CD14-positive monocyte (primary cell): ENCODE measurements at regions of chr15 and their contacts with region 1.

Region 1: DNA sequence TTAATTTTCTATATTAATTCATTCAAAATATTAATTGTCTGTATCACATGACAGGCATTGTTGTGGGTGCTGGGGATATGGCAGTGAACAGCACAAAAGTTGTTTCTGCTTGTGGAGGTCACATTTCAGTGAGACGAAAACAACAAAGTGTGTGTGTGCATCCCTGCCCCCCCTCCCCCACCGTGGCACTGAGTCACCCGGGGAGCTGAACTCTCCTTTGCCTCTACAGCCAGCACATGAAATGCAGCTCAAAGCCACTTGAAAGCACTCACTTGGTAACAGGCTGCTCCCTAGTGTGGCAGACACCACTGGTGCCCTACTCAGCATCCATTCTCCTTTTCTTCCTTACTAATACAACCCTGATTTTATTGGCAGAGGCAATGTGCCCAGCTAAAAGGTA is 16.9 kb upstream of the SCAMP5 start:
- DNase-seq: no peak
- H3K4me3 ChIP-seq: no peak overlapping the region
- H3K4me3 Mint-ChIP-seq: no peak overlapping the region
- H3K27ac ChIP-seq: no peak overlapping the region
- H3K27ac Mint-ChIP-seq: no peak overlapping the region
- H3K4me1 ChIP-seq: no peaks in the 10 kb centered on the region
- H3K4me1 Mint-ChIP-seq: no peaks in the 10 kb centered on the region
- H3K27me3 ChIP-seq: no peaks in the 10 kb centered on the region
- H3K27me3 Mint-ChIP-seq: peaks cover 10 to 22% (median 13%) of the 10 kb centered on the region in 3 donors
- CTCF ChIP-seq: no peak

Region 2: GRCh38 chr15:74674119-74674518 is 304.4 kb before region 1 on chr15:
- intact Hi-C with region 1: loop called in 1 of 2 experiments (anchors 10 kb)
- DNase-seq: no peak
- H3K4me3 ChIP-seq: no peak overlapping the region
- H3K4me3 Mint-ChIP-seq: no peak overlapping the region
- H3K27ac ChIP-seq: no peak overlapping the region
- H3K27ac Mint-ChIP-seq: no peak overlapping the region
- H3K4me1 ChIP-seq: no peaks in the 10 kb centered on the region
- H3K4me1 Mint-ChIP-seq: no peaks in the 10 kb centered on the region
- H3K27me3 ChIP-seq: no peaks in the 10 kb centered on the region
- H3K27me3 Mint-ChIP-seq: no peaks in the 10 kb centered on the region
- CTCF ChIP-seq: no peak

Region 3: DNA sequence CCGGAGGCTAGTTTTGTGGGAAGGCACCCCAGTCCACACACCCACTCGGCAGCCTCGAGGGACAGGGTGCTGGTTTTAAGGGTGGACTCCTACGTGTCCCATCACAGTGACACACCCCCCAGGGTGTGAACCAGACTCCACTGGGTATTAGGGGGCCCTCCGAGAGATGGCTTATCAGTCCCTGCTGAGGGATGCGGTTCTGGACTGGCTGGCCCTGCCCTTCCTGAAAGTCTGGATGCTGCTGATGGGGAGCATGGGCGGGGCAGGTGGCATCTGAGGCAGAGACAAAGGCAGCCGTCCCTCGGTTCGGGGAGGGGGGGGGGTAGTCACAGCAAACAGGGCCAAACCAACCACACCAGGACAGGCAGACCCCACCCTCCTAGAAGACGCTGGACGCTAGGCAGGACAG is 134.6 kb before region 1 on chr15:
- intact Hi-C with region 1: no loop called
- DNase-seq: no peak
- H3K4me3 ChIP-seq: peak overlapping the region in 1 of 3 experiments; percentile 95
- H3K4me3 Mint-ChIP-seq: no peak overlapping the region
- H3K27ac ChIP-seq: peak overlapping the region in 1 of 2 donors; percentile 44
- H3K27ac Mint-ChIP-seq: peak overlapping the region in 2 of 7 donors; percentile 58 to 83
- H3K4me1 ChIP-seq: peaks cover 16 to 22% of the 10 kb centered on the region in 2 donors
- H3K4me1 Mint-ChIP-seq: peaks cover 37% of the 10 kb centered on the region
- H3K27me3 ChIP-seq: no peaks in the 10 kb centered on the region
- H3K27me3 Mint-ChIP-seq: peaks cover 0 to 3% (median 0%) of the 10 kb centered on the region in 3 donors
- CTCF ChIP-seq: no peak

Region 4: DNA sequence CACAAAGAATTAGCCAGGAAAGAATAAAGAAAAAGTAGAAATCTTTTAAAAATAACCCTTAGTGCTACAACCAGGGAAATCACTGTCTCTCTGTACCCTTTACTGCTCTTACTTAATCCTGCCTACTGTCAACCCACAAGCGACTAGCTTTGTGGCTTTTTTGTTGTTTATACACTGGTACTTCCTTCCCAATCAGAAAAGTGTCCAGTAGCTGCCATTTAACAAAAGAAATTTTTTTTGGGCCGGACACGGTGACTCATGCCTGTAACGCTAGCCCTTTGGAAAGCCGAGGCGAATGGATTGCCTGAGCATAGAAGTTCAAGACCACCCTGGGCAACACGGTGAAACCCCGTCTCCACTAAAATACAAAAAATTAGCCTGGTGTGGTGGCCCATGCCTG is 58.0 kb before region 1 on chr15:
- intact Hi-C with region 1: no loop called
- DNase-seq: no peak
- H3K4me3 ChIP-seq: no peak overlapping the region
- H3K4me3 Mint-ChIP-seq: no peak overlapping the region
- H3K27ac ChIP-seq: no peak overlapping the region
- H3K27ac Mint-ChIP-seq: peak overlapping the region in 3 of 7 donors; percentile 63 to 86 (median 76)
- H3K4me1 ChIP-seq: peaks cover 0 to 5% of the 10 kb centered on the region in 2 donors
- H3K4me1 Mint-ChIP-seq: peaks cover 9% of the 10 kb centered on the region
- H3K27me3 ChIP-seq: no peaks in the 10 kb centered on the region
- H3K27me3 Mint-ChIP-seq: peaks cover 0 to 1% (median 0%) of the 10 kb centered on the region in 3 donors
- CTCF ChIP-seq: no peak

Region 5: DNA sequence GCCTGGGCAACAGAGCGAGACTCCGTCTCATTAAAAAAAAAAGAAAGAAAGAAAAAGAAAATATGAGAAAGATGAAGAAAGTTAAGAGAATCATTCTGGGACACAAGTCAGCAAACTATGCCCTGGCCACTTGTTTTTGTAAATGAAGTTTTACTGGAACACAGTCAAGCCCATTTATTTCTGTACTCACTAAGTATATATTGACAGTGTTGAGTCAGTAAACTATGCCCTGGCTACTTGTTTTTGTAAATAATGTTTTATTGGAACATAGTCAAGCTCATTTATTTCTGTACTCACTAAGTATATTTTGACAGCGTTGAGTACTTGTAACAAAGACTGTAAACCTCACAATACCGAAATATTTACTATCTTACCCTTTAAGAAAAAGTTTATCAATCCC is 515.2 kb after region 1 on chr15:
- intact Hi-C with region 1: no loop called
- DNase-seq: no peak
- H3K4me3 ChIP-seq: no peak overlapping the region
- H3K4me3 Mint-ChIP-seq: no peak overlapping the region
- H3K27ac ChIP-seq: no peak overlapping the region
- H3K27ac Mint-ChIP-seq: peak overlapping the region in 2 of 7 donors; percentile 25 to 42
- H3K4me1 ChIP-seq: no peaks in the 10 kb centered on the region
- H3K4me1 Mint-ChIP-seq: no peaks in the 10 kb centered on the region
- H3K27me3 ChIP-seq: no peaks in the 10 kb centered on the region
- H3K27me3 Mint-ChIP-seq: peaks cover 0 to 1% (median 0%) of the 10 kb centered on the region in 3 donors
- CTCF ChIP-seq: no peak